GM12878 (cell line): ENCODE measurements at regions of chr12 and their contacts with region 1.

Region 1: DNA sequence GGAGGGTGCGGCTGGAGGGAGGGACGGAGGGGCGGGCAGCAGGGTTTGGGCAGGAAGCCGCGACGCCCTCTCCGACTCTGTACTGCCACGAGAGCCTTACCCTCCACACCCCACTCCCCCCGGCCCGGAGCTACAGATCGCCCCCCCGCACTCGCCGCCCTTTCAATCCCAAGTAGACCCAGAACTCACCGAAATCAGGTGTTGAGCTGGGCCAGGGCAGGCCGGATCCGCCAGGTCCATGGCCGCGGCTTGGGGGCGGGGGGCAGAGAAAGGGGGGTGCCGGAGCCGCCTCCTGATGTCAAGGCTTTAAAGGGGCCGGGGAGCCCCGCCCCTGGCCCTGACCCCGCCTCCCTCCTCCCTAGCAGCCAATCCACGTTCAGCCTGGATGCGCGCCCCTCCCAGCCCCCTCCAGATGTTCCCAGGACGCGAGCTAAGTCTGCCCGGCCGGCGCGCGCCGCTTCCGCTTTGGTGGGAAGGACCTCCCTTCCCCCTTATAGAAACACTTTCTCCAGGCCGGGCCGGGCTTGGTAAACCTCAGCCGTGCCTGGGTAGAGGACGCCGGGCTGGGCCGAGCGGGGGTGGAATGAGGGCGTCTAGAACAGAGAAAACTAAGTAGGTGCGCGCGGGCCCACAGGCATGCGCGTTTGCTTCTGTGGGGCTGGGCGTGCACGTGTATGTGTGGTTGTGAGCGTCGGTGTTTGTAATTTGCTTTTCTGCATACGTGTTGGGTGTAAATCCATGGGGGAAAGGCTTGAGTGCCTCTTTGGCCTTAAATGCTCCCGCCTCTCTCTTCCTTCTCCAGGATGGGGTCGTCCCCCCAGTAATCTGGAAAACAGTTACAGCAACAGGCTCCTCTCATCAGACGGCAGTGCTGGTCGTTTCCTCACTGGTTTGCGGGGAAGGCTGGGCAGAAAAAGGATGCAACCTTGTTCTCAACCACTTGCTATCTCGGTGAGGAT is at the start of gene NCKAP5L:
- DNase-seq: no peak
- ATAC-seq: peak; percentile 97
- H3K4me3 ChIP-seq: peak within 1 kb of the TSS; percentile 99
- H3K27ac ChIP-seq: peak within 1 kb of the TSS; percentile 58
- H3K4me1 ChIP-seq: peaks cover 26% of the 10 kb centered on the region
- H3K27me3 ChIP-seq: no peaks in the 10 kb centered on the region
- CTCF ChIP-seq: no peak
- EP300 ChIP-seq: 0 out of 4 replicates have a peak, but pooled peaks of 1 of the 2 experiments have one; percentile 21
- POLR2A ChIP-seq: peak; percentile 85
- RAD21 ChIP-seq: no peak
- polyA plus RNA-seq, gene NCKAP5L: 0.03 to 0.16 TPM

Region 2: DNA sequence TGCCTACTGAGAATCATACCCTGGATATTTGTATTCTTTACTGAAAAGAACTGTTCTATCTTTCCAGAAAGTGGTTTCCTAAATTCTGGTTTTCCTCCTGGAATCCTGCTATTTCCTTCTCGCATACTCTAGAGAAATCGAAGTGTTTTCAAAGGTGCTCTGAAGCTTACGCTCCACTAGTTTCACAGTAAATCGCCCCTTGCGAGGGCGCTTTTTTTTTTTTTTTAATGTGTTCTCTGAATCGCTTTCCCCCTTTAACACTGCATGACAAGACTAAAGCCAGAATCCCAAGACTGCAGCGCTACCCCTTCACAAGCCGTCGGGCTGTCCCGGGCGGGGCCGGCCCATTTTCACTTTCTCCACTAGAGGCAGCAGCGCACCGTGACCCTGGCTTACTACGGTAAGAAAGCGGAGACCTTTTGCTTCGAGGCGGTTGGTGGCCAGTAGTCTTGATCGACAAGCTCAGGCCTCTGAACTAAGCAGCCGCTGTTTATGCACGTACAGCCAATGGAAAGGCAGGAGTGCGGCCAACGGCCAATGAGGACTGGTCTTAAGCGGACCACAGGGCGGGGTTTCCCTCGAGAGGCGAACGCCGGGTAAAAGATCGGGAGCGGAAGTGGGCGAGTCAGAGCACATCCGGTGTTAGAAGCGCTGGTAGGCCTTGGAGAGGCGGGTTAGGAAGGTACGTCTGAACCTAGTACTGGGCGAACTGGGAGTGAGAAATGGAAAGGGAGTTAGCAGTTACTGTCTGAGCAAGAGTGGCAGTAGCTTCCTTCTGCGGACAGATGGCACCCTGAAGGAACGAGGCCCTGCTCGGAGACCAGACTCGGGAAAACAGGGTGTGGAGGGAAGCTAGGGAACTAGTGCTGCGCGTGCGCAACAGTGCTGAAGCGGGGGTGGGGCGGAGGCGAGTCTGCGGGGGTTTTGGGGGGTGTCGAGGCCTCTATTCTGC is 87.2 kb before region 1 on chr12 and contains the start of gene TMBIM6:
- CTCF ChIA-PET with region 1: interaction called, 11 read pairs
- POLR2A ChIA-PET with region 1: interaction called, 6 read pairs
- RAD21 ChIA-PET with region 1: interaction called, 6 read pairs
- SMC1A ChIA-PET with region 1: interaction called, 8 read pairs
- in situ Hi-C with region 1: no loop called
- intact Hi-C with region 1: no loop called
- DNase-seq: peak; percentile 99
- ATAC-seq: peak; percentile 96
- H3K4me3 ChIP-seq: peak within 1 kb of the TSS; percentile 77
- H3K27ac ChIP-seq: peak within 1 kb of the TSS; percentile 96
- H3K4me1 ChIP-seq: 0 out of 2 replicates have a peak, but pooled peaks cover 2% of the 10 kb centered on the region
- H3K27me3 ChIP-seq: no peaks in the 10 kb centered on the region
- CTCF ChIP-seq: peak; percentile 91 to 99 (median 98)
- EP300 ChIP-seq: no peak
- POLR2A ChIP-seq: peak; percentile 98
- RAD21 ChIP-seq: peak; percentile 80
- polyA plus RNA-seq, gene TMBIM6: 853 to 1,192 TPM

Region 3: DNA sequence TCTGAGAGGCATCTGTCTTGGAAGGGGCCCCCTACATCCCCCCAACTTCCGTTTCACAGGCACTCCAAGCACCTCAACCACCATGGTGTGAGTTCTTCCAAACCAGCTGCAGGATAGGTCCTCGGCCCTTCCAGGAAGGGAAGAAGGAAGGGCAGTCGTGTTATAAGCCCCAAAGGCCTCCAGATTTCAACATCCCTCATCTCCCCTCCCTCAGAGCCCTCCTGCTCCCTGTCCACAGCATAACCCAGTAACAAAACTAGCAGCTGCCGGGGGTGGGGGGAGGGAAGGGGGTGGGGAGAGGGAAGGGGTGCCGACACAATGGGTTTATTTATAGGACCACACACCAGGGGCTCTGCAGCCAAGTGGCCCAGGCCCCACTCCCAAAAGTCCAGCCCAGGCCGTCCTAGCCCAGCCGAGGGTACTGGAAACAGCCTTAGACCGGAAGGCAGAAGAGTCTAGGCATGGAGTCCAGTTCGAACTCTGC is 18.5 kb before region 1 on chr12:
- CTCF ChIA-PET with region 1: interaction called, 4 read pairs
- POLR2A ChIA-PET with region 1: interaction called, 3 read pairs
- RAD21 ChIA-PET with region 1: interaction called, 4 read pairs
- SMC1A ChIA-PET with region 1: interaction called, 5 read pairs
- in situ Hi-C with region 1: no loop called
- intact Hi-C with region 1: loop called (anchors 1 kb)
- DNase-seq: no peak
- ATAC-seq: no peak
- H3K4me3 ChIP-seq: no peak overlapping the region
- H3K27ac ChIP-seq: no peak overlapping the region
- H3K4me1 ChIP-seq: peaks cover 25% of the 10 kb centered on the region
- H3K27me3 ChIP-seq: no peaks in the 10 kb centered on the region
- CTCF ChIP-seq: no peak
- EP300 ChIP-seq: no peak
- POLR2A ChIP-seq: no peak
- RAD21 ChIP-seq: no peak

Region 4: DNA sequence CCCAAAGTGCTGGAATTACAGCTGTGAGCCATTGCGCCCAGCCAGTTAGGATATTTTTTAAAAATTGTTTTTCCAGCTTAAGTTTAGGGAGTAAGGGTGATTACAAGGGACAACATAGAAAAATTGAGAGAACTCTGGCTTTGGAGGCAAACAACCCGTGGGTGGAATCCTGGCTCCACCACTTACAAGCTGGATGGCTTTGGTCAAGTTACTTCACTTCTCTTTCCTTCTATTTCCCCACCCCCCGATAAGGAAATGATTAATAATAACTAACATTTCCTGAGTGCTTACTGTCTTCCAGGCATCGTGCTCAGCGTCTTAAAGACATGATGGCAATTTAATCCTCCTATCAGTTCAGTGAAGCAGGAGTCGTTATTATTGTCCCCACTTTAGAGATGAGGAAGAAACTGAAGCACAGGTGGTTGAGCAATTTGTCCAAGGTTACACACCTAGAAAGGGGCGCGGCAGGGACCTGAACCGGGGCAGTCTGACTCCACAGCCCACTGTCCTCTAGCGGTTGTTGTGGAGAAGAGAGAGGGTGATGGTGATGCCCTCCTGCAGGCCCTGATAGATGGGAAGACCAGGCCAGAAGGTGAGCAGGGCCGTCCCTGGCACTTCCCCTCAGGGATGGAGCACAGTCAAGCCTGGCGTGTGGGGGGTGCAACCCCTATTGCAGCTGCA is 92.0 kb after region 1 on chr12:
- CTCF ChIA-PET with region 1: no interaction called
- POLR2A ChIA-PET with region 1: no interaction called
- RAD21 ChIA-PET with region 1: no interaction called
- SMC1A ChIA-PET with region 1: no interaction called
- in situ Hi-C with region 1: no loop called
- intact Hi-C with region 1: no loop called
- DNase-seq: no peak
- ATAC-seq: no peak
- H3K4me3 ChIP-seq: no peak overlapping the region
- H3K27ac ChIP-seq: no peak overlapping the region
- H3K4me1 ChIP-seq: no peaks in the 10 kb centered on the region
- H3K27me3 ChIP-seq: peaks cover 1 to 2% of the 10 kb centered on the region in 2 experiments; a peak in 2 of 4 replicates
- CTCF ChIP-seq: no peak
- EP300 ChIP-seq: no peak
- POLR2A ChIP-seq: no peak
- RAD21 ChIP-seq: no peak